ENCODE measurements at regions of chr1 and their contacts with region 1.

Region 1: GRCh38 chr1:151909150-151910149 is at the start of gene THEM4:
- DNase-seq: peak; percentile 92
- ATAC-seq: peak; percentile 99
- H3K4me3 ChIP-seq: peak within 1 kb of the TSS; percentile 8 to 82 (median 70)
- H3K4me3 Mint-ChIP-seq: peak within 1 kb of the TSS; percentile 92
- H3K27ac ChIP-seq: peak within 1 kb of the TSS; percentile 54 to 70
- H3K27ac Mint-ChIP-seq: peak within 1 kb of the TSS; percentile 86
- H3K4me1 ChIP-seq: peaks cover 7 to 17% of the 10 kb centered on the region in 2 donors
- H3K4me1 Mint-ChIP-seq: peaks cover 11% of the 10 kb centered on the region
- H3K27me3 ChIP-seq: no peaks in the 10 kb centered on the region
- H3K27me3 Mint-ChIP-seq: no peaks in the 10 kb centered on the region
- CTCF ChIP-seq: peak; percentile 20
- total RNA-seq, gene THEM4: 16.1 and 19.8 TPM in 2 replicates

Region 2: DNA sequence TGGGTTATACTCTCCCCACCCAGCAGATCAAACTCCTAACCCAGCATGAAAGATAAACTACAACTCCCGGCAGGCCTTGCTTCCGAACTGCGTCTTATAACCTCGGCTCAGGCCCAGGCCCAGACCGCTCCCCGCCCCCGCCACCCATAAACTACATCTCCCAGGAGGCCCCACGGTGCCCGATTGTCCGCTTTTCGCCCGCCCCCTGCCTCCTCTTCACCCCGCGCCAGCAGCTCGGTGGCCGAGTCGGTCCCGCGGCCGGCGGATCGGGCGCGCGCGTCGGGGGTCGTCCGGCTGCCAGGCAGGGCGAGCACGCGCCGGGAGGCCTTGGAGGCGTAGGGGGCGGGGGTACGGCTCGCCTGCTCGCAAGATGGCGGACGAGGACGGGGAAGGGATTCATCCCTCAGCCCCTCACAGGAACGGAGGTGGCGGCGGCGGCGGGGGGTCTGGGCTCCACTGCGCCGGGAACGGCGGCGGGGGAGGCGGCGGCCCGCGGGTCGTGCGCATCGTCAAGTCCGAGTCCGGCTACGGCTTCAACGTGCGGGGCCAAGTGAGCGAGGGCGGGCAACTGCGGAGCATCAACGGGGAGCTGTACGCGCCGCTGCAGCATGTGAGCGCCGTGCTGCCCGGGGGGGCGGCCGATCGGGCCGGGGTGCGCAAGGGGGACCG is 297.5 kb before region 1 on chr1 and contains the start of gene SNX27:
- CTCF ChIA-PET with region 1: no interaction called
- POLR2A ChIA-PET with region 1: no interaction called
- intact Hi-C with region 1: loop called (anchors 1 kb)
- DNase-seq: peak; percentile 94
- ATAC-seq: peak; percentile 96
- H3K4me3 ChIP-seq: peak within 1 kb of the TSS; percentile 52 to 94 (median 84)
- H3K4me3 Mint-ChIP-seq: peak within 1 kb of the TSS; percentile 91
- H3K27ac ChIP-seq: peak within 1 kb of the TSS in 1 of 2 donors; percentile 79
- H3K27ac Mint-ChIP-seq: peak within 1 kb of the TSS; percentile 94
- H3K4me1 ChIP-seq: peaks cover 11 to 18% of the 10 kb centered on the region in 2 donors
- H3K4me1 Mint-ChIP-seq: peaks cover 32% of the 10 kb centered on the region
- H3K27me3 ChIP-seq: peaks cover 0 to 3% (median 1%) of the 10 kb centered on the region in 4 experiments
- H3K27me3 Mint-ChIP-seq: peaks cover 5% of the 10 kb centered on the region
- CTCF ChIP-seq: no peak
- total RNA-seq, gene SNX27: 43.2 and 45.6 TPM in 2 replicates

Region 3: GRCh38 chr1:151858030-151858691 is 51.3 kb before region 1 on chr1:
- CTCF ChIA-PET with region 1: no interaction called
- POLR2A ChIA-PET with region 1: no interaction called
- intact Hi-C with region 1: no loop called
- DNase-seq: no peak
- ATAC-seq: no peak
- H3K4me3 ChIP-seq: no peak overlapping the region
- H3K4me3 Mint-ChIP-seq: no peak overlapping the region
- H3K27ac ChIP-seq: no peak overlapping the region
- H3K27ac Mint-ChIP-seq: no peak overlapping the region
- H3K4me1 ChIP-seq: peaks cover 8 to 15% of the 10 kb centered on the region in 2 donors
- H3K4me1 Mint-ChIP-seq: peaks cover 12% of the 10 kb centered on the region
- H3K27me3 ChIP-seq: no peaks in the 10 kb centered on the region
- H3K27me3 Mint-ChIP-seq: peaks cover 3% of the 10 kb centered on the region
- CTCF ChIP-seq: no peak

Region 4: DNA sequence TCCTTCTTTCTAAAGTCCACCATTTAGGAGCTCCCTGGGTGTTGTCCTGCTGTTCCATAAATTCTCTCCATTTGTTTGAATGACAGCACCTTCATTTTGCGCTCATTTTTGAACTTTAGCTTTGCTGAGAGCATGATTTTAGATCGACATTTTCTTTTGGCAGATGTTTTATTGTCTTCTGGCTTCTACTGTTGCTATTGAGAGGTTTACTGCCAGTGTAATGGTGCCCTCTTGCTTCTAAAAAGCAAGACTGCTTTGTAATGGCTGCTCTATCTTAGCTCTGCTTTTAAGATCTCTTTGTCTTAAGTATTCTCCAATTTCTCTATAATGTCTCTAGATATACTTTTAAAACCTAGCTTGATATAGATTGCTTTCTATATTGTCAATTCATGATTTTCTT is 28.0 kb before region 1 on chr1:
- CTCF ChIA-PET with region 1: no interaction called
- POLR2A ChIA-PET with region 1: no interaction called
- intact Hi-C with region 1: no loop called
- DNase-seq: no peak
- ATAC-seq: no peak
- H3K4me3 ChIP-seq: no peak overlapping the region
- H3K4me3 Mint-ChIP-seq: no peak overlapping the region
- H3K27ac ChIP-seq: no peak overlapping the region
- H3K27ac Mint-ChIP-seq: no peak overlapping the region
- H3K4me1 ChIP-seq: peaks cover 6 to 8% of the 10 kb centered on the region in 2 donors
- H3K4me1 Mint-ChIP-seq: peaks cover 9% of the 10 kb centered on the region
- H3K27me3 ChIP-seq: no peaks in the 10 kb centered on the region
- H3K27me3 Mint-ChIP-seq: no peaks in the 10 kb centered on the region
- CTCF ChIP-seq: no peak

Region 5: DNA sequence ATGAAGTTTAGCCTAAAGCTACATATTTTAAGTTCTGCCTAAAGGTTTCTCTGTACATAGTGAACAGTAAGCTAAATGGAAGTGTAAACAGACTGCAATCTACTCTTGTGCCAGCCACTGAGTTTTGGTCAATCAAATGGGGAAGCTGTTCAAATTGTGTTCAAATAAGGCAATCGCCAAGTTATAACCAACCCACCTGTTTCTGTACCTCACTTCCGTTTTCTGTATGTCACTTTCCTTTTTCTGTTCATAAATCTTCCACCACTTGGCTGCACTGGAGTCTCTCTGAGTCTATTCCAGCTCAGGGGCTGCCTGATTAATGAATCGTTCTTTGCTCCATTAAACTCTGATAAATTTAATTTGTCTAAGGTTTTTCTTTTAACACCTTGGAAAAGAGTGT is 10.7 kb after region 1 on chr1:
- CTCF ChIA-PET with region 1: interaction called, 25 read pairs
- POLR2A ChIA-PET with region 1: interaction called, 22 read pairs
- intact Hi-C with region 1: loop called (anchors 1 kb)
- DNase-seq: peak; percentile 72
- ATAC-seq: peak; percentile 46
- H3K4me3 ChIP-seq: peak overlapping the region in 1 of 5 experiments; percentile 24
- H3K4me3 Mint-ChIP-seq: peak overlapping the region; percentile 10
- H3K27ac ChIP-seq: peak overlapping the region; percentile 18 to 74
- H3K27ac Mint-ChIP-seq: peak overlapping the region; percentile 90
- H3K4me1 ChIP-seq: peaks cover 23 to 39% of the 10 kb centered on the region in 2 donors
- H3K4me1 Mint-ChIP-seq: peaks cover 31% of the 10 kb centered on the region
- H3K27me3 ChIP-seq: no peaks in the 10 kb centered on the region
- H3K27me3 Mint-ChIP-seq: no peaks in the 10 kb centered on the region
- CTCF ChIP-seq: no peak

Region 6: DNA sequence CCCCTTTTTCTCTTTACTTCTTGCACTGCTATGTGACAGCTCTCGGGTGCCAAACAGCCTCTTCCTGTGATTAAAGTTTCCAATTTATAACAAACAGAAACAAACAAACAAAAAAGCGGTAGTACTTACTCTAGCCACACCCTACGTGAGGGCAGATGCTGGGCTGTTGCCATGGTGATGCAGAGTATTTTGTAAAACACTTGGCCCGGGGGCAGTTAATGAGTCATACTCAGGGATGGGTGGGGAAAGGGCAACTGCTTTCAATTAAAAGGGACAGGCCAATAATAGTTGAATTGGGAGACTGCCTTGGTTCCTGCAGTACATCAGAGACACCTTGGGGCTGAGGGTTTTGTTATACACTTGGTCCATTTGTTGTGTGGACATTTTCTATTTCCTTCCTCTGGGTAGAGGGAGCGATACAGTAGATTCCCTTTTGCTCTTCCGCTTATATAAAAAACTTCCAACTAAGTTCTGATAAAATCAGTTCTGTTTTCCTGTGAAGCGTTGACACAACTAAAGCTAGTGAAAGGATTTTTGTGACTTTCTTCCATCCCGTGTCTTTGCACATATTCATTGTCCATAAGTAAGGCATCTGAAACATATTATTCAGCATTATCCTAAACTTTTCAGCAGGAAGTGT is 36.4 kb after region 1 on chr1:
- CTCF ChIA-PET with region 1: interaction called, 4 read pairs
- POLR2A ChIA-PET with region 1: no interaction called
- intact Hi-C with region 1: loop called (anchors 1 kb)
- DNase-seq: peak; percentile 90
- ATAC-seq: peak; percentile 72
- H3K4me3 ChIP-seq: no peak overlapping the region
- H3K4me3 Mint-ChIP-seq: peak overlapping the region; percentile 71
- H3K27ac ChIP-seq: peak overlapping the region; percentile 84 to 88
- H3K27ac Mint-ChIP-seq: peak overlapping the region; percentile 93
- H3K4me1 ChIP-seq: peaks cover 31 to 38% of the 10 kb centered on the region in 2 donors
- H3K4me1 Mint-ChIP-seq: peaks cover 43% of the 10 kb centered on the region
- H3K27me3 ChIP-seq: no peaks in the 10 kb centered on the region
- H3K27me3 Mint-ChIP-seq: peaks cover 4% of the 10 kb centered on the region
- CTCF ChIP-seq: no peak

Region 7: DNA sequence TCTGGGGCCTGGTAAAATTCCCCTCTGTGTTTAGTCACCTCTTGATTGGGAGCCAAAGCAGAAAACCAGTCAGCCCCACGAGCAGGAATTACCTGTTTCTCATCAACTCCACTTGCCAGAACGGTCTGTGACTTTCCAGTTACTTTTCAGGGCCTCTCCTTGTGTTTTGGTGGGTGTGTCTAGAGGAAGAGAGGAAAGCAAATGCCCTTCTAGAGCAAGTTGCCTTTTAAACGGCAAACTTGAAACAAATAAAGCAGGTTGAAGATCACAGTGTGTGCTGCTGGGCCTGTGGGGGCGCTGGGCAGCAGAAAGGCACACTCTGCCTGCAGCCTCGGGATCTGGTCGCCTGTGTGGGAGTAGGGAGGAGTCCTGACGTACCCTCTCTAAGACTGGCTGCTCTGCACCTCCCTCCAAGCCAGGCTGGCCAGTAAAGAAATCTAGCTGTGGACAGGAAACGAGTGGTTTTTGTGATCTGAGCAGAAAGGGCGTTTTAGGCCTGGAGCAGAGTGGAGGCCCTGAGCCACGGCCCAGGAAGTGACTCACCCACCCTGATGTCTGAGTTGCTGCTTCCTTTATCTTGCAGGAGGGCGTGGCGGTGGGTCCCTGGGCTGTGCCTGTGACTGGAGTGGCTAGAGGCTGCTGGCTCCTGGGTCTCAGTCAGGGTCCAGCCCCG is 138.4 kb after region 1 on chr1:
- CTCF ChIA-PET with region 1: no interaction called
- POLR2A ChIA-PET with region 1: no interaction called
- intact Hi-C with region 1: loop called (anchors 1 kb)
- DNase-seq: peak; percentile 88
- ATAC-seq: peak; percentile 92
- H3K4me3 ChIP-seq: peak overlapping the region in 4 of 5 experiments; percentile 14 to 30 (median 19)
- H3K4me3 Mint-ChIP-seq: peak overlapping the region; percentile 76
- H3K27ac ChIP-seq: peak overlapping the region; percentile 93 to 97
- H3K27ac Mint-ChIP-seq: peak overlapping the region; percentile 97
- H3K4me1 ChIP-seq: peaks cover 17 to 19% of the 10 kb centered on the region in 2 donors
- H3K4me1 Mint-ChIP-seq: peaks cover 16% of the 10 kb centered on the region
- H3K27me3 ChIP-seq: no peaks in the 10 kb centered on the region
- H3K27me3 Mint-ChIP-seq: peaks cover 5% of the 10 kb centered on the region
- CTCF ChIP-seq: peak; percentile 48